ENCODE measurements at regions of chr1 and their contacts with region 1.

Region 1: GRCh38 chr1:225890346-225891228 is 1.6 kb upstream of the LEFTY1 start:
- DNase-seq: no peak

Region 2: GRCh38 chr1:225517697-225518096 is 372.9 kb before region 1 on chr1:
- intact Hi-C with region 1: no loop called
- DNase-seq: no peak

Region 3: GRCh38 chr1:225906370-225906866 is 15.8 kb after region 1 on chr1:
- intact Hi-C with region 1: loop called in 1 of 2 experiments (anchors 2 kb)
- DNase-seq: no peak

Measured in posterior vena cava (tissue), 2 donors.